ENCODE measurements at regions of chr1 and their contacts with region 1.

Region 1: DNA sequence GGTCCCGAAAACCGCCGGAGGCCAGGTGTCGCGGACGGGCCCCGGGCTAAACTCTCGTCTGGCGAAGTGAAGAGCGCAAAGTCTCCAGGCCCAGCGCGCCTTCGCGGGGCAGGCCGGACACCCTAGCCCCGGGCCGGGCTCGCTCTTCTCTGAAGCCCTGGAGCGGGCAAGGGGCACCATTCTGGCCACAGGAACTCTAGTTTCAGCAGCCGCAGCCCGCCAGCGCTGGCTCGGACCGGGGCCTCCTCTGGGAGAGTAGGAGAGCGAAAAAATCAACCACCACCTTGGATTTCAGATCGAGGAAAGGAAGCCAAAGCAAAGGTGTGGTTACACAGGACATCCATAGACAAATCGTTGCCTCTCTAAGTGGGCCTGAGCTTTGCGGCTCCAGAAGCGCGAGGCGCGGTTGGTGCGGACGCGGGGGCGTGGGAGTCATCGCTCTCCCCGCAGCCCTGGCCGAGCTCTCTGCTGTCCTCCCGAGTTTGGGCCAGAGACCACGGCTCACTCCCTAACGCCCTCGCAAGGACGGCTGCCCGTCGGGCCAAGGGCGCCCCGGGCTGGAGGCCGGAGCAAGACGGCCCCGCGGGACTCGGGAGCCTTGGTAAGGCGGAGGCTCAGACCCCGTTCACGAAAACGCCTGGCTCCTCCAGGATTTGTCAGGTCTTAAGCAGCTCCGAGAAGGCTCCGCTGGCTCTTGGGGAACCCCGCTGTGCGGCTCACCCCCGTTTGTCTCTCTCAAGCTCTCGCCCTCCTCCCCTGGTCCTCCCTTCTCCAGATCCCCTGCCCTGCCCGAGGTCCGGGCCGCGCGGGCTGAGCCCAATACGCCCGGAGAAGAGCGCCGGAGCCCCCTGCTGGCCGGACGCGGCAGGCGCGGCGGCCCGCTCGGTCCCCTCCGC is 132.9 kb upstream of the DPYD start:
- H3K4me3 Mint-ChIP-seq: peak overlapping the region; percentile 87
- H3K27ac Mint-ChIP-seq: peak overlapping the region; percentile 50
- H3K4me1 Mint-ChIP-seq: peaks cover 28% of the 10 kb centered on the region
- H3K27me3 Mint-ChIP-seq: peaks cover 59% of the 10 kb centered on the region

Region 2: GRCh38 chr1:97137862-97138514 is 915.7 kb before region 1 on chr1:
- intact Hi-C with region 1: loop called (anchors 5 kb)
- H3K4me3 Mint-ChIP-seq: no peak overlapping the region
- H3K27ac Mint-ChIP-seq: no peak overlapping the region
- H3K4me1 Mint-ChIP-seq: peaks cover 13% of the 10 kb centered on the region
- H3K27me3 Mint-ChIP-seq: no peaks in the 10 kb centered on the region

Region 3: GRCh38 chr1:97540346-97540888 is 513.3 kb before region 1 on chr1:
- intact Hi-C with region 1: loop called (anchors 10 kb)
- H3K4me3 Mint-ChIP-seq: no peak overlapping the region
- H3K27ac Mint-ChIP-seq: no peak overlapping the region
- H3K4me1 Mint-ChIP-seq: no peaks in the 10 kb centered on the region
- H3K27me3 Mint-ChIP-seq: no peaks in the 10 kb centered on the region

Region 4: GRCh38 chr1:97820470-97821188 is 233.1 kb before region 1 on chr1:
- intact Hi-C with region 1: loop called (anchors 10 kb)
- H3K4me3 Mint-ChIP-seq: no peak overlapping the region
- H3K27ac Mint-ChIP-seq: no peak overlapping the region
- H3K4me1 Mint-ChIP-seq: peaks cover under 1% of the 10 kb centered on the region
- H3K27me3 Mint-ChIP-seq: no peaks in the 10 kb centered on the region

Region 5: DNA sequence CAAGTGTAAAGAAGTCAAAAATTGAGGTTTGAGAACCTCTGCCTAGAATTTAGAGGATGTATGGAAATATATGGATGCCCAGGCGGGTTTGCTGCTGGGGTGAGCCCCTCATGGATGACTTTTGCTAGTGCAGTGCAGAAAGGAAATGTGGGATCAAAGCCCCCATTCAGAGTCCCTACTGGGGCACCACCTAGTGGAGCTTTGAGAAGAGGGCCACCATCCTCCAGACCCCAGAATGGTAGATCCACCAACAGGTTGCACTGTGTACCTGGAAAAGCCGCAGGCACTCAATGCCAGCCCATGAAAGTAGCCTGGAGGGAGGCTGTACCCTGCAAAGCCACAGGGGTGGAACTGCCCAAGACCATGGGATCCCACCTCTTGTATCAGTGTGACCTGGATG is 197.8 kb after region 1 on chr1:
- intact Hi-C with region 1: no loop called
- H3K4me3 Mint-ChIP-seq: no peak overlapping the region
- H3K27ac Mint-ChIP-seq: no peak overlapping the region
- H3K4me1 Mint-ChIP-seq: no peaks in the 10 kb centered on the region
- H3K27me3 Mint-ChIP-seq: no peaks in the 10 kb centered on the region

Region 6: GRCh38 chr1:98288494-98288893 is 234.8 kb after region 1 on chr1:
- intact Hi-C with region 1: no loop called
- H3K4me3 Mint-ChIP-seq: no peak overlapping the region
- H3K27ac Mint-ChIP-seq: no peak overlapping the region
- H3K4me1 Mint-ChIP-seq: peaks cover 13% of the 10 kb centered on the region
- H3K27me3 Mint-ChIP-seq: no peaks in the 10 kb centered on the region

Region 7: DNA sequence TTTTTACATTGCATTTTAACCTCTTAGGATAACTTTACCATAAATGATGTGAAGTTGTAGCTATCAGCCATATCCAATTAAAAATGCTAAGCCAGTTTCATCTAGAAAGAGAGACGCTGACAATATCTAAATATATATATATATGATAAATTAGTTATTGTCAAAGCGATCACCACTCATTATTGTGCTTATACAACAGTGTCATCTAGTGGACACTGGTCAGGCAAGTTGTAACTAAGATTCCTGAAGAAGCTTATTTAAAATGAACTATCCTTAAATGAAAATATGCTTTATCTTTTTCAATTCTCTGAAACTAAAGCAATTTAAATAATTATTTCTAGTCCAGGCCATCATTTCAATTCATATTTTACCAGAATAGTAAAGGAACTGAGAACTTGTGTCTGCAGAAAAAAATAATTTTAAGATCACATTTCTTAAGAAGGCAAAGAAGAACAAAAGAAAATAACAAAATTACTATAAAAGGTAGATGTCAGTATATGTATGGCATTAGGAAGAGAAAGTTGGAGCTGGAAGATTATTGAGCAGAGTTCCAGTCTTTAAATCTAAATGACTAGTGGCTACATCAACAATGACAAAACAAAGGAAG is 414.5 kb after region 1 on chr1:
- intact Hi-C with region 1: loop called (anchors 2 kb)
- H3K4me3 Mint-ChIP-seq: no peak overlapping the region
- H3K27ac Mint-ChIP-seq: no peak overlapping the region
- H3K4me1 Mint-ChIP-seq: peaks cover 11% of the 10 kb centered on the region
- H3K27me3 Mint-ChIP-seq: peaks cover 5% of the 10 kb centered on the region

Measured in dendritic cell treated with granulocyte-macrophage colony-stimulating factor and Interleukin-4, amounts not matched to agents 40 ng/mL and 50 ng/mL, for 4 days (primary cell).